ENCODE measurements at regions of chr1 and their contacts with region 1.

Region 1: GRCh38 chr1:58304346-58304975 is 242.1 kb downstream of the OMA1 start:
- DNase-seq: peak; percentile 79
- H3K4me3 ChIP-seq: no peak overlapping the region
- H3K27ac ChIP-seq: peak overlapping the region; percentile 20
- H3K4me1 ChIP-seq: peaks cover 40% of the 10 kb centered on the region
- H3K27me3 ChIP-seq: no peaks in the 10 kb centered on the region
- CTCF ChIP-seq: no peak

Region 2: DNA sequence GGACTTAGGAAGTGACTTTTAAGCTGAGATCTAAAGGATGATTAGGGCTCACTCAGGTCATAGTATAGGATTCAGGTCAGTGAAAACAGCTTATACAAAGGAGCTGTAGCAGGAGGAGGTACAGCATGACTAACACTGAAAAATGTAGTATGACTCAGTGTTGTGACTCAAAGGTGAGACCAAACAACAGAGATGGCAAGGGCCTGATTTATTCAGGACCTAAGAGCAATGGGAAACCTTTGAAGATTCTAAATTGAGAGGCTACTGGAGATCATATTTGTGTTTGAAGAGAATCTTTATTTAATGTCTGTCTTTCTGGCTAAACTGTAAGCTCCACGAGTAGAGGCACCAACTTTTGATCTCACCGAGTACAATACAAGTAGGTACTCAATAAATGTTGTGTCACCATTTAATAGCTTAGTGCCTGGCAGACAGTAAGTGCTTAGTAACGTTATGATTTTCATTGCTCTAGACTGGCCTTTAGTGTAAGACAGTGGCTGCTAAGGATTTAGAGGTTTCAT is 1615.9 kb before region 1 on chr1:
- CTCF ChIA-PET with region 1: no interaction called
- POLR2A ChIA-PET with region 1: no interaction called
- intact Hi-C with region 1: no loop called
- DNase-seq: no peak
- H3K4me3 ChIP-seq: no peak overlapping the region
- H3K27ac ChIP-seq: no peak overlapping the region
- H3K4me1 ChIP-seq: no peaks in the 10 kb centered on the region
- H3K27me3 ChIP-seq: no peaks in the 10 kb centered on the region
- CTCF ChIP-seq: no peak

Region 3: GRCh38 chr1:58358346-58358745 is 53.9 kb after region 1 on chr1:
- CTCF ChIA-PET with region 1: no interaction called
- POLR2A ChIA-PET with region 1: interaction called, 17 read pairs
- intact Hi-C with region 1: no loop called
- DNase-seq: peak; percentile 35
- H3K4me3 ChIP-seq: no peak overlapping the region
- H3K27ac ChIP-seq: no peak overlapping the region
- H3K4me1 ChIP-seq: peaks cover 1% of the 10 kb centered on the region
- H3K27me3 ChIP-seq: no peaks in the 10 kb centered on the region
- CTCF ChIP-seq: no peak

Region 4: DNA sequence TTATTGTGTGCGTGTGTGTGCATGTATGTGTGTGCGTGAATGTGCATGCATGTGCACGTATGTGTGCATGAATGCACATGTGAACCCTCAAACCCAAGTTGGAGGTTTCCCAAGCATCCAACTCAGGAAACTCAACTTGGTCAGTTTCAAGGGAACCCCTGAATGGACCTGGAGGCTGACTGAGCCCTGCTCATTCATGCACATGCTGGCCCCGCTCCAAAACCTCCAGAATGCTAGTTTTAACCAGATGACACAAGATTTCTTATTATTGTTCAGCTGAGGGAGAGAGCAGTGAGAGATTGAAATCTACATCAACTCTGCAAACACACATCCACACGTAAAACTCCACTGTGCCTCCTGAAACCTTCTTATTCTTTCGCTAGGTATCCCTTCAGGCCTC is 137.7 kb after region 1 on chr1:
- CTCF ChIA-PET with region 1: no interaction called
- POLR2A ChIA-PET with region 1: no interaction called
- intact Hi-C with region 1: loop called (anchors 5 kb)
- DNase-seq: peak; percentile 94
- H3K4me3 ChIP-seq: no peak overlapping the region
- H3K27ac ChIP-seq: peak overlapping the region; percentile 74
- H3K4me1 ChIP-seq: peaks cover 56% of the 10 kb centered on the region
- H3K27me3 ChIP-seq: no peaks in the 10 kb centered on the region
- CTCF ChIP-seq: no peak

Measured in A673 (cell line).